H1 (cell line): ENCODE measurements at regions of chr5 and their contacts with region 1.

Region 1: DNA sequence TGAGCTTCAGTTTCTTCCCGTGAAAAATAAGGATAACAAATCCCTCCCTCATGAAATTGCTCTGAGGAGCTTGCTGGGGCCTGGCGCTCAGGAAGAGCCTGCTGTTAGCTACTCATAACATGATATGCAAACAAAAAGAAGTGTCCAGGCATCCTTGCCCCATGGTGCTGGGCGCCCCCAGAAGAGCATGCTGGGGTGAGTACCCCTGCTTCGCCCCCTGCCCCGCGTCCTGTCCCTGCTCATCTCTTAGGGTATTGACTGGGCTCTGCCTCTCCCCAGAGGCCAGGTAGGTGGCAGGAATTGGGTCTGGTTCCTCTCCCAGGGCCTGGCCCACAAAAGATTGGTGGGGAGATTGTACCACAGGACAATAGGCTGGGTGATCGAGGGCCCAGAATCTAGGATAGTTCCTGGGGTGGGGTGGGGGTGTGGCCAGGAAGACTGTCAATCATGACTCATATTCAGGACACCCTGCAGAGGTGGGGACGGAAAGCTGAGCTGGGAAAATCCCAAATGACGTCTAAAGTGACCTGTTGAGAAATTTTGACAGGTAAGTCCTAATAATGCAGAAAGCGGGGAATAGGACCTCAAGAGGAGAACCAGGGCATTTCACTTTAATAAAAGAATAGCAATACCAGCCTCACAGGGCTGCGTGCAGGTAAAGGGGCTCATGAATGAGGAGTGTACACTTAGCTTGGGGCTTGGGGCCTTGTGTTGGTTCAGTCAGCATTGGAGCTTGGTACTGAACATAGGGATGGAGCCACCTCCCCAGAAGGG is 8.9 kb downstream of the PITX1 start:
- DNase-seq: no peak
- H3K4me3 ChIP-seq: no peak overlapping the region
- H3K27ac ChIP-seq: no peak overlapping the region
- H3K4me1 ChIP-seq: peaks cover 0 to 16% (median 13%) of the 10 kb centered on the region in 4 experiments; a peak in 6 of 7 replicates
- H3K27me3 ChIP-seq: peaks cover 43 to 63% (median 59%) of the 10 kb centered on the region in 4 experiments
- CTCF ChIP-seq: no peak
- EP300 ChIP-seq: no peak
- POLR2A ChIP-seq: no peak
- RAD21 ChIP-seq: no peak

Region 2: DNA sequence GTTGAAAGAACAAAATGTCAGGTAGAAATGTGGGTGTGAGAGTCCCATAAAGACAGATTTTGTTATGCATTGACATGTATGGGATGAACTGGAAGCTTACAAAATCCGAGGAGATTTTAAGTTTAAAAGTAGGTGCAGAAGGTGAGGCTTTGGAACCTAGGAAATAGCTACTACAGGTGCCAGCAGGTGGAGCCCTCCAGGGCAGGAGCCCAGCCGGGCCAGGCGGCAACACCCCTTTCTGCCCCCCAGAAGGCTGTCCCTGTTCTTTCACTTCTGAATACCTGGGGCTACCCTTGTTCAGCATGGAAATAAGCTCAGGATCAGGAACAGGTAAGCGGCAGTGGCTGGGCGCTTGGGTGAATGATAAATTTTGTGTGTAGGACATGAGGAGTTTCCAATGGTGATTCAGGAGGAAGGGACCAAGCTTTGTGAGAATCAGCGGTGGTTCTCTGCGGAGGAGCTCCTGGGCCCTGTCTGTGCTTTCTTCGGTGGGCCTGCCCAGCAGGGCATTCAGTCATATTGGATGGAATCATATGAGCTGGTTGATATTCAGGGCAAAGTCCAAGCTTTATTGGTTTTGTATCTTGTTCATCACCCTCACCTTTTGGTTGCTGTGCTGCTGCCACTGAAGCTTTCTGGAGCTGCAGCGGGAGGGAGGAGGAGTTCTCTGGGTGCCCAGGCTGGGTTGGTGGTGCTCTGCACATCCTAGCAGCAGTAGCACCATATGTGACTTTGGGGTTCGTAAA is 107.9 kb before region 1 on chr5:
- CTCF ChIA-PET with region 1: interaction called, 13 read pairs
- POLR2A ChIA-PET with region 1: no interaction called
- DNase-seq: peak in 1 of 2 experiments; percentile 67
- H3K4me3 ChIP-seq: no peak overlapping the region
- H3K27ac ChIP-seq: no peak overlapping the region
- H3K4me1 ChIP-seq: no peaks in the 10 kb centered on the region; a peak in 1 of 7 replicates
- H3K27me3 ChIP-seq: no peaks in the 10 kb centered on the region
- CTCF ChIP-seq: peak; percentile 59 to 68 (median 63)
- EP300 ChIP-seq: no peak
- POLR2A ChIP-seq: no peak
- RAD21 ChIP-seq: peak; percentile 61 to 63

Region 3: GRCh38 chr5:135010502-135011354 is 14.4 kb before region 1 on chr5:
- CTCF ChIA-PET with region 1: interaction called, 12 read pairs
- POLR2A ChIA-PET with region 1: interaction called, 4 read pairs
- DNase-seq: no peak
- H3K4me3 ChIP-seq: no peak overlapping the region
- H3K27ac ChIP-seq: no peak overlapping the region
- H3K4me1 ChIP-seq: peaks cover 0 to 2% (median under 1%) of the 10 kb centered on the region in 4 experiments; a peak in 1 of 7 replicates
- H3K27me3 ChIP-seq: no peaks in the 10 kb centered on the region; a peak in 1 of 7 replicates
- CTCF ChIP-seq: no peak
- EP300 ChIP-seq: no peak
- POLR2A ChIP-seq: no peak
- RAD21 ChIP-seq: no peak

Region 4: DNA sequence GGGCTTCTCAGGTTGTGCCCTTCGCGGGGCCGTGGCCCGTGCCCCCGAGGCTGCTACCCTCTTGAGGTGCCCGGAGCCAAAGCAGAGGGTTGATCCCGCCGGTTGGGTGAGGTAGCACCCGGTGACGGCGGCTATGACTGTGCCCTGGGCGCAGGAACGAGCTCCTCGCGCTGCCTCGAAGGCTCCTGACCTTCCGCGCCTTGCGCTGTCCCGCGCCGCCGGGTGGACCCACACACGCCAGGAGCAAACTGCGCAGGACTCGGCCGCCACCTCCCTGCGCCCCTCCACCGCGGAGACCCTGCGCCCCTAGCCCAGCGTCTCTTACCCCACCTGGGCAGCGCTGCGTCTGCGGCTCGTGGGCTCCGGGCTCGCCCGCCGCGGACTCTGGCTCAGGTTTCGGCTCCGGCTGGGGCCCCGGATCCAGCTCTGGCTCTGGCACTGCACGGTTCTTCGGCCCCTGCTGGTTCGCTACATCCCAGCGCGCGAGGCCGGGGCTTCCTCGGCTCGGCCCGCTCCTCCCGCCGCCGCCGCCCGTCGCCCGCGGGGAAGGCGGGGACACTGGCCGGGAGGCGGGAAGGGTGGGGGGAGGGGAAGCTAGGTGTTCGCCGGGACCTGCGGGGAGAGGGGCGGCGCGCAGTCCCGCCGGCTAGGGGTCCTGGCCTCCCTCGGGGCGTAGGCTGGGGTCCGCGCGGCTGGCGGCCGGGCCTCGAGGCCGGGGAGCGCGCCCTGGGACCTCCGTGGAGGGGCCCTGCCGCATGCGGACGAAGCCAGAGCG is 14.3 kb after region 1 on chr5:
- CTCF ChIA-PET with region 1: interaction called, 10 read pairs
- POLR2A ChIA-PET with region 1: interaction called, 20 read pairs
- DNase-seq: peak in 1 of 2 experiments; percentile 67
- H3K4me3 ChIP-seq: peak overlapping the region; percentile 9 to 58 (median 34)
- H3K27ac ChIP-seq: no peak overlapping the region
- H3K4me1 ChIP-seq: peaks cover 3 to 30% (median 17%) of the 10 kb centered on the region in 4 experiments; a peak in 6 of 7 replicates
- H3K27me3 ChIP-seq: peaks cover 99 to 100% (median 100%) of the 10 kb centered on the region in 4 experiments
- CTCF ChIP-seq: no peak
- EP300 ChIP-seq: no peak
- POLR2A ChIP-seq: no peak
- RAD21 ChIP-seq: no peak